ENCODE measurements at regions of chr3 and their contacts with region 1.

Region 1: DNA sequence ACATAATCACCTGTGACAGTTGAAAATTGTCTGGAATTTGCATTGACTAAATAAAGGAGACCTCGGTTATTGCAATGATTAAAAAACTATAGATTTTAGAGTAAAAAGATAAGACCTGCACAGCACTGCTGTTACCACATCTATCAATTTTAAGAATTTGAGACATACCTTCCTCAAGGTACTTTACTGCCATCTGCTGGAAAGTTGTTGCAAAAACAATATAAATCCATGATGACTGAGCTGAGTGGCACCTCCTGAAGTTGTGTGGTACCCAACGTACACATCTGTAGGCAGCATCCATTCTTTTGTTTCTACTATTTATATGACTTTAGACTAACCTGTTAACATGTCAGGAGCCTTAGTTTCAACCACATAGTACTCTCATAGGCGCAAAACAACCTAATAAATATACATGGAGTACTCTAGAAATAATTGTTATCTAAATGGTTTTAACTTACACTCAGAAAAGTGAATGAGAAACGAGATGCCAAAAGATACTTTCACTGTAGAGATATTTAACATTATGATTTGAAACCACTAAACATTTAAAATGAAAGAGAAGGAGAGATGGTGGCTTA is 106.7 kb downstream of the GHSR start:
- DNase-seq: no peak
- H3K4me3 ChIP-seq: no peak overlapping the region
- H3K27ac ChIP-seq: no peak overlapping the region
- H3K4me1 ChIP-seq: no peaks in the 10 kb centered on the region
- H3K27me3 ChIP-seq: no peaks in the 10 kb centered on the region
- CTCF ChIP-seq: peak in 2 of 3 experiments; percentile 47 to 59
- POLR2A ChIP-seq: no peak

Region 2: GRCh38 chr3:171301998-171302397 is 1039.6 kb before region 1 on chr3:
- intact Hi-C with region 1: loop called (anchors 5 kb)
- DNase-seq: no peak
- H3K4me3 ChIP-seq: no peak overlapping the region
- H3K27ac ChIP-seq: no peak overlapping the region
- H3K4me1 ChIP-seq: no peaks in the 10 kb centered on the region
- H3K27me3 ChIP-seq: no peaks in the 10 kb centered on the region
- CTCF ChIP-seq: no peak
- POLR2A ChIP-seq: no peak

Region 3: GRCh38 chr3:171646357-171647133 is 695.0 kb before region 1 on chr3:
- intact Hi-C with region 1: loop called (anchors 10 kb)
- DNase-seq: no peak
- H3K4me3 ChIP-seq: no peak overlapping the region
- H3K27ac ChIP-seq: peak overlapping the region; percentile 60
- H3K4me1 ChIP-seq: peaks cover 6% of the 10 kb centered on the region
- H3K27me3 ChIP-seq: no peaks in the 10 kb centered on the region
- CTCF ChIP-seq: peak in 2 of 3 experiments; percentile 48 to 81
- POLR2A ChIP-seq: no peak

Region 4: DNA sequence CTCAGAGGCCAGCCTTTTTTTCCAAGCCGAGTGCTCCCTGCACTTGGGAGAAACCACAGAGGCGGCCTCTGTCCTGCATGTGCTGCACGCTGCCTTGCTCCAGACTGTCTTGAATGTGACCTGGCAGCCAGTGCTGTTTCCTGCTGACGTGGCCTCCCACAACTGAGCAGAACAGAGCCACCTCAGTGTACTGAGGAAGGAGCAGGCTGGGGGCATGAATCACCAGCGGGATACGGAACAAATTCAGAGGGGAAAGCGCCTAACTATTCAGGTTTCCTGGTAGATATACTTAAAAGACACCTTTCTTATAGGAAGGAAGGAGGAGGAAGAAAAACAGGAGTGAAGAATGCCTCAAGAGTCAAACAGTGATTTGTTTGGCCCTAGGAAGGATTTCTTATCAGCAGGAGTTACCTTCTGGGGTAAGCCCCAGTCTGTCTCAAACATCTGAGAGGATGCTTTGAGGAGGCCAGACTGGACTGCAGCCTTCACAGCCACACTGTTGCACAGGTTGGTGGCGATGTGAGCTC is 188.2 kb before region 1 on chr3:
- intact Hi-C with region 1: no loop called
- DNase-seq: peak in 1 of 2 donors; percentile 98
- H3K4me3 ChIP-seq: no peak overlapping the region
- H3K27ac ChIP-seq: peak overlapping the region; percentile 79
- H3K4me1 ChIP-seq: peaks cover 60% of the 10 kb centered on the region
- H3K27me3 ChIP-seq: no peaks in the 10 kb centered on the region
- CTCF ChIP-seq: no peak
- POLR2A ChIP-seq: peak in 1 of 2 donors; percentile 18

Measured in vagina (tissue), 2 donors.